Esophagus squamous epithelium (tissue), 5 donors: ENCODE measurements at regions of chr1 and their contacts with region 1.

Region 1: GRCh38 chr1:38818175-38818976 is 41.2 kb downstream of the RRAGC start:
- DNase-seq: no peak
- H3K4me3 ChIP-seq: peak overlapping the region; percentile 23 to 63 (median 38)
- H3K27ac ChIP-seq: peak overlapping the region in 1 of 4 donors; percentile 7
- H3K4me1 ChIP-seq: peaks cover 9 to 25% (median 12%) of the 10 kb centered on the region in 3 donors
- H3K27me3 ChIP-seq: peaks cover 0 to 83% (median 12%) of the 10 kb centered on the region in 4 donors
- CTCF ChIP-seq: peak; percentile 64 to 91 (median 77)
- POLR2A ChIP-seq: no peak

Region 2: DNA sequence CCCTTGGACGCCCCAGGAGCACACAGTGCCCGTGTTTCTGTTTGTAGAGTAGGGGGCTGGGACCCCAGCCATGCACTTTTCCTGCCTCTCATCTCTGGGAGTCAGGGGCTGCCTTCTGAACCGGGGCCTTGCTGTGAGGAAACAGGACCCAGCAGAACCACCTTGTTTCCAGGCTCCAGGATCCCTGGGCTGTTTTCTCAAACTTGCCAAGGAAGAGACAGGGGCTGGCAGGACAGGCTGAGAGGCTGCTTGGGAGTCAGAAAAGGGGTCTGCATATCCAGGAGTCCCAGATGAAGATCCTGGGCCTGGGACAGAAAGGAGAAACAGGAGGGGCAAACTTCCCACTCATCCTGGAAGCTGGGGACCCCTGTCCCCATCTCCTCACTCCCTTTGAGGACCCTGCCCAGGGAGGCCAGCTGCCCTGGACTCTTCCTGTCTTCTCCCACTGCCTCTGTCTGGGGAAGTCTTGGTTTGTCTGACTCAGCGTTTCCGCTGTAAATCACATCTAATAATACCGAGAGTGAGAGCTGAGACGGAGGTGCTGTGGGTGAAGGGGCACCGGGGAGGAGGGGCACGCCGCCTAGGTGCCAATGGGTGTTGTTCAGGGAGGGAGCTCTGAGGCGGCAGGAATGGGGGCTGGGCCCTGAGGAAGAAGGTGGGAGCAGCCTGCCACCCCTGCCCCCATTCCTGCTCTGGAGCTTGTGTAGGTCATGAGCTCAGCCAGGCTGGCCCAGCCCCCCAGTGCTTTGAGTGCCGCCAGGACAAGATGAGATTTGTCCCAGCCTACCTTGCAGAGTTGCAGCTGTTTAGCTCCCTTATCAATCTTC is 788.5 kb before region 1 on chr1:
- intact Hi-C with region 1: loop called (anchors 5 kb)
- DNase-seq: no peak
- H3K4me3 ChIP-seq: peak overlapping the region in 1 of 4 donors; percentile 37
- H3K27ac ChIP-seq: peak overlapping the region; percentile 79 to 86 (median 84)
- H3K4me1 ChIP-seq: peaks cover 45 to 68% (median 60%) of the 10 kb centered on the region in 3 donors
- H3K27me3 ChIP-seq: no peaks in the 10 kb centered on the region
- CTCF ChIP-seq: no peak
- POLR2A ChIP-seq: no peak

Region 3: DNA sequence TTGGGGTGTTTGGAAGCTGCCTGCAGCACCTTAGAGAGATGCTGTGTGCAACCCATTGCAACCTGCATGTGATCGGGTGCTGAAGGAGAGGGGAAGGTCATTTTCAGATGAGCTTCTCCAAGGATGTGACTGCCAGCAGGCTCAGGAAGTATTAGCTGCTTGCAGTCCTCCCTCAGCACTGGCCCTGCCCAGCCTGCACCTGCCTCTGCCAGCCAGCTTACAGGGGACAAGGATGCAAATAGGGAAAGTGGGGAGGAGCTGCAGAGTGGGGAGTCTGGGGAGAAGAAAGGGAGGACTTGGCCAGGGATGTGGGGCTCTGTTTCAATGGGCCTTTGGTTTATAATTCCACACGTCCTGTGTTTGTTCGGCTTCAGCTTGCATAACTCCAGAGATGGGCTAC is 213.3 kb before region 1 on chr1:
- intact Hi-C with region 1: no loop called
- DNase-seq: no peak
- H3K4me3 ChIP-seq: no peak overlapping the region
- H3K27ac ChIP-seq: no peak overlapping the region
- H3K4me1 ChIP-seq: peaks cover 0 to 4% (median 0%) of the 10 kb centered on the region in 3 donors
- H3K27me3 ChIP-seq: no peaks in the 10 kb centered on the region
- CTCF ChIP-seq: no peak
- POLR2A ChIP-seq: no peak

Region 4: GRCh38 chr1:38891753-38892152 is 73.4 kb after region 1 on chr1:
- intact Hi-C with region 1: no loop called
- DNase-seq: no peak
- H3K4me3 ChIP-seq: no peak overlapping the region
- H3K27ac ChIP-seq: no peak overlapping the region
- H3K4me1 ChIP-seq: no peaks in the 10 kb centered on the region
- H3K27me3 ChIP-seq: no peaks in the 10 kb centered on the region
- CTCF ChIP-seq: no peak
- POLR2A ChIP-seq: no peak